ENCODE measurements at regions of chr6 and their contacts with region 1.

Region 1: DNA sequence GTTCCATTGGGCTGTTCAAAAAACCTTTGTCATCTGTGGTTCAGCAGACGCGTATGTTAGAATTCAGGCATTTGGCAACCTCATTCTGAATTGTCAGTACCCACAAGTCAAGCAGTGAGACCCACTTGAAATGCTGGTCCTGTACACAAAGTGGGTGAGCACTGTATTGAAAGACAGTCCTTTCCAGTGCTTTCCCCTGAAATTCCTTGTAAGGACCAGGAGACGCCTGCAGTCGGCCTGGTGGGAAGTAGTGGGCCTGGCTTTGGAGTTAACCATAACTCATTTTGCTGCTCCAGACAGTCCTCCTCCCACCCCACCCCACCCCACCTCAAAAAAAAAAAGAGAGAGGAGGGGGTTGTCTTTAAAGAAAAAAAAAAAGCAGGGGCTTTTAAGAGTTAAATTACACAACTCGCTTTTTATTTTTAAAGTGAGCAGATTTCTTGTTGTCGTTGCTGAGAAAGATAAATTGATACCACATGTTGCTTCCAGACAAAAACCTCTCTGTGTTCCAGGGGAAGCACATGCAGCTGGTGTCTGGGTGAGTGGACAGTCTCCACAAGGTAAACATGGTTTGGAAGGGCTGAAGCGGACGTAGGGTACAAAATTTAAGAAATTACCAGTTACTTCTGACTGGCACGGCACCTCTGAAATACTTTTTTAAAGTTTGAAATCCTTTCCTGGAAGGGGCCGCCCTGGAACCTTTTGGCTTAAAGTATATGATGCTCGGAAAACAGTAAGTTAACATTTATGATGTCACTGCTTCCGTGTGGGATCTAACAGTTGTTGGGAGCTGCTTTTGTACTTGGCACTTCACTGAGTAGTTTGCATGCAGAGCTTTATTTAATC is 95.3 kb downstream of the FOXO3 start:
- DNase-seq: no peak
- H3K4me3 ChIP-seq: peak overlapping the region; percentile 30 to 49 (median 32)
- H3K27ac ChIP-seq: peak overlapping the region; percentile 81 to 89 (median 86)
- H3K4me1 ChIP-seq: peaks cover 87 to 100% (median 94%) of the 10 kb centered on the region in 4 donors
- H3K27me3 ChIP-seq: no peaks in the 10 kb centered on the region
- CTCF ChIP-seq: no peak
- EP300 ChIP-seq: peak; percentile 76
- POLR2A ChIP-seq: no peak

Region 2: DNA sequence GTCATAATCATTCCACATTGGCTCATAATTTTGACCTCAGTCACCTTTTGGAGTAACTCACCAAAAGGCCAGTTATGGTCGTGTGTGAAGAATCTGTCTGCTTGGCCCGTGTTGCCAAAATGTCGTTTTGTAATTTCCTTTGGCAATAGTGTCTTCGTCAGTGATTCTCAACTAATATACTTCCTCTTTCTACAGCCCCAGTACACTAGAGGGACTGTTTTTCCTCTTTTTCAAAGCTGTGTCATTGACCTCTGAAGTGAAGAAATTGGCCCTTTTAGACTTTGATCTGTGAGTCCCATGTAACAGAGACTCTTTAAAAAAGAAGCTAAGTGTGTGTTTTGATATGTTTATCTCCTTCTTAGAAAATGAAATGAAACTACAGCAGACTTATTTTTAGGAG is 90.1 kb before region 1 on chr6:
- intact Hi-C with region 1: no loop called
- DNase-seq: no peak
- H3K4me3 ChIP-seq: peak overlapping the region; percentile 6 to 95 (median 90)
- H3K27ac ChIP-seq: peak overlapping the region; percentile 98 to 100 (median 99)
- H3K4me1 ChIP-seq: peaks cover 55 to 81% (median 76%) of the 10 kb centered on the region in 4 donors
- H3K27me3 ChIP-seq: no peaks in the 10 kb centered on the region
- CTCF ChIP-seq: peak; percentile 12 to 33 (median 25)
- EP300 ChIP-seq: no peak
- POLR2A ChIP-seq: no peak

Region 3: GRCh38 chr6:108592371-108593337 is 63.4 kb before region 1 on chr6:
- intact Hi-C with region 1: loop called (anchors 5 kb)
- DNase-seq: no peak
- H3K4me3 ChIP-seq: peak overlapping the region in 3 of 4 donors; percentile 3 to 13 (median 12)
- H3K27ac ChIP-seq: peak overlapping the region; percentile 84 to 89 (median 86)
- H3K4me1 ChIP-seq: peaks cover 96 to 100% (median 99%) of the 10 kb centered on the region in 4 donors
- H3K27me3 ChIP-seq: no peaks in the 10 kb centered on the region
- CTCF ChIP-seq: no peak
- EP300 ChIP-seq: no peak
- POLR2A ChIP-seq: no peak

Region 4: DNA sequence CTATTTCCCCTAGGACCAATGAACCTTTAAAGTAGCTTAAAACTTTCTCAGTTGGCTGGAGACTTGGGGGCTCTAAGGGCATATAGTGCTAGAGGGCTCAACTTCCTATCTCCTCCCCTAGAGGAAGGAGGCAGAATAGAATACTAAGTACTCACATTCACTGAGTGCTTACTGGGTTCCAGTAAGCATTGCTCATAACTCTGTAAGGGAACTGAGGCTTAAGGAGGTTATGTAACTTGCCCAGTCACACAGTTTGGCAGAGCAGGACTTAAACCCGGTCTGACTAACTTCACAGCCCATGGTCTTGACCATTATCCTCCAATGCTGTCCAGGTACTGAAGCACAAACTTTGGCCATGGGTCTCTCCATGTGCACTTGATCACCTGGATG is 426.2 kb after region 1 on chr6:
- intact Hi-C with region 1: loop called (anchors 10 kb)
- DNase-seq: no peak
- H3K4me3 ChIP-seq: no peak overlapping the region
- H3K27ac ChIP-seq: peak overlapping the region in 3 of 4 donors; percentile 38 to 77 (median 75)
- H3K4me1 ChIP-seq: peaks cover 31 to 80% (median 74%) of the 10 kb centered on the region in 4 donors
- H3K27me3 ChIP-seq: no peaks in the 10 kb centered on the region
- CTCF ChIP-seq: no peak
- EP300 ChIP-seq: no peak
- POLR2A ChIP-seq: no peak

Region 5: DNA sequence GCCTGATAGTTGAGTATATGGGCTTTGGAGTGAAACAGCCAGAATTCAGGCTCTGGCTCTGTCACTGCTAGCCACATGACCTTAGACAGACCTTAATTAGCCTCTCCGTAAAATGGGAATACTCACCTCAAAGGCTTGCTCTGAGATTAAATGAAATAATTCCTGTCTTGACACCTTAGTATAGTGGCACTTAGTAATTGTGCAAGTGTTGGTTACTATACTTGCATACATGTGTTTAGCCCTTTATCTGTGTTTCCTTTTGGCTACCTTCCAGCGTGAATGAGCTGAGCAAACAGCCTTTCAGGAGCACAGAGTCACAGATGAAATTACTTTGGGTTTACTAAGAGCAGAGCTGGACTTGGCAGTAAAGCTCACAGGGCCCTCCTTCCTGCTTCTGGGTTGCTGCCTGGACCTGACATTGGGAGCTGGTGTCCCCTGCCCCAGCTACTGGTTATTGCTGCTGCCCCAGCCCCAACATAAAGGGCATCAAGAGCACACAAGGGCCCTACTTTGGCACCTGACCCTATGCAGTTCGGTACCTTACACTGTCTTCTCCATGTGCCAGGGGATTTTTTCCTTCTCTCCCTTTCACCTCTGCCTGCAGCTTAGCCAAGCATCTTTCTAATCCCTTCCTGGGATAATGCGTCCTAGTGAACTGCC is 693.5 kb after region 1 on chr6:
- intact Hi-C with region 1: no loop called
- DNase-seq: peak; percentile 83
- H3K4me3 ChIP-seq: no peak overlapping the region
- H3K27ac ChIP-seq: no peak overlapping the region
- H3K4me1 ChIP-seq: peaks cover 14 to 25% (median 22%) of the 10 kb centered on the region in 4 donors
- H3K27me3 ChIP-seq: no peaks in the 10 kb centered on the region
- CTCF ChIP-seq: no peak
- EP300 ChIP-seq: no peak
- POLR2A ChIP-seq: no peak

Measured in esophagus muscularis mucosa (tissue), 4 donors.